ENCODE measurements at regions of chr11 and their contacts with region 1.

Region 1: GRCh38 chr11:67239783-67240575 is 26.3 kb upstream of the GRK2 start:
- DNase-seq: peak; percentile 98
- H3K4me3 Mint-ChIP-seq: peak overlapping the region; percentile 96
- H3K27ac Mint-ChIP-seq: peak overlapping the region; percentile 97
- H3K4me1 Mint-ChIP-seq: peaks cover 24% of the 10 kb centered on the region
- H3K27me3 Mint-ChIP-seq: no peaks in the 10 kb centered on the region
- CTCF ChIP-seq: no peak

Region 2: DNA sequence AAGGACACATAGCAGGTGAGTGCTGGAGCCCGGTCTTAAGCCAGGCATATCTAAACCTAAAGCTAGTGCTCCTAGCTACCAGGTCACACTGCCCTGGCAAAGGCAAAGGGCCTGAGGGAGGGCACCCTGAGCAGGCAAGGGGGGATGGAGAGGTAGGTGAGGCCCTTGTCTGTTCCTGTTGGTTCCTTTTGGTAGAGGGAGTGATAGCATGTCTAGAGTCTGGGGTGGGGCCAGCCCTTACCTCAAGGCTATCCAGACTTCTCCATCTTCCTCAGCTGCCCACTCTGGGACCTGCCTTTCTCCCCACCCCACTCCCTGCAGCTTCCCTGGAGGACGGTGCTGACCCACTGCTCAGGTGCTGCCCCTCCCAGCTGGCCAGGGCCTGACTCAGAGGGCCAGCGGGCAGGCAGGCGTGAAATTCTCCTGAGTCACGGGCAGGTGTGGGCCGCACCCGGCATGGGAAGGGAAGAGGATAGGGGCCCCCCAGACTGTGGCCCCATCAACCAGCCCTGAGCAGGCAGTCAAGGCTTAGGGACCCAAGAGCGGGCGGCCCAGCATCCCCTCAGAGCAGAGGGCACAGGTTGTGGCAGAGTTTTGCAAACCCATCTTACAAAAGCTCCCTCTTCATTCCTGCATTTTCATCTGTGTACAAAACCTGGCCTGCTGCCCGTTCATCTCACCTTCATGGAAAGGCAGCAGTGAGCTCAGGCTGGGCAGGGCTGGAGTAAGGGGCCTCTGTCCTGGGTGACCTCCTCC is 177.5 kb before region 1 on chr11:
- CTCF ChIA-PET with region 1: no interaction called
- POLR2A ChIA-PET with region 1: interaction called, 14 read pairs
- intact Hi-C with region 1: no loop called
- DNase-seq: peak; percentile 72
- H3K4me3 Mint-ChIP-seq: peak overlapping the region; percentile 62
- H3K27ac Mint-ChIP-seq: peak overlapping the region; percentile 89
- H3K4me1 Mint-ChIP-seq: peaks cover 25% of the 10 kb centered on the region
- H3K27me3 Mint-ChIP-seq: no peaks in the 10 kb centered on the region
- CTCF ChIP-seq: no peak

Region 3: DNA sequence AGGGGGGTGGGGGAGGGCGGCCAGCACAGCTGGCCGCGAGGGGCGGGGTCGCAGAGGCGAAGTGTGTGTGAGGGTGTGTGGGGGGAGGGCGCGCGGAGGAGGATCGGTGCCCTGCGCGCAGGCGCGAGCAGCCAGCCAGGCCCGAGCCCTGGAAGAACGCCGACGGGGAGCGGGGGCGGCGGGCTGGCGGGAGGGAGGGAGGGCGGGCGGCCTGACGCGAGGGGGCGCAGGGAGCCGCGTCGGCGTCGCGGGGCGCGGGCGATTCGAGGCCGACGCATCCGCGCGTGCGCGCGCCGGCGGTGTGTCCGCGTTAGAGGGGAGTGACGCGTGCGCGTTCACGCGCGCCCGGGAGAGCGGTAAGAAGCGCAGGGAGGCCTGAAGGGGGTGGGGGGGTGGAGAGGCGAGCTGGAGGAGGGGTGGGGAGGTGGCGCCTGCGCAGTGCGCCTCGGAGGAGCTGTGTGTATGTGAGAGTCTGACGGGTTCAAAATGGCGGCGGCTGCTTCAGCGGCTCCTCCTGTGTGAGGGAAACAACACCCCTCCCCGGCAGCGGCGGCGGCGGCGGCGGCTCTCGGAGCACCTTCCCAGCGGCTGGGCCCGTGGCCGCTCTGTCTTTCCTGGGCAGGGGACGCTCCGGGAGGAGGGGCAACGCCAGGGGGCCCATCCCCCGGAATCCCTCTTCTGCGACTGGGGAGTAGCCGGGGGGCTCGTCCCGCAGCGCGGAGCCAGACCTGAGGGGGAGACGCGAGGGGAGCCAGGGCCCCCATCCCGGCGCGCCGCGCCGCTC is 121.0 kb before region 1 on chr11 and contains the start of gene KDM2A:
- CTCF ChIA-PET with region 1: no interaction called
- POLR2A ChIA-PET with region 1: interaction called, 10 read pairs
- intact Hi-C with region 1: loop called (anchors 2 kb)
- DNase-seq: peak; percentile 97
- H3K4me3 Mint-ChIP-seq: peak within 1 kb of the TSS; percentile 93
- H3K27ac Mint-ChIP-seq: peak within 1 kb of the TSS; percentile 88
- H3K4me1 Mint-ChIP-seq: peaks cover 17% of the 10 kb centered on the region
- H3K27me3 Mint-ChIP-seq: no peaks in the 10 kb centered on the region
- CTCF ChIP-seq: peak; percentile 8
- total RNA-seq, gene KDM2A: 63.8 and 64.5 TPM in 2 replicates

Region 4: DNA sequence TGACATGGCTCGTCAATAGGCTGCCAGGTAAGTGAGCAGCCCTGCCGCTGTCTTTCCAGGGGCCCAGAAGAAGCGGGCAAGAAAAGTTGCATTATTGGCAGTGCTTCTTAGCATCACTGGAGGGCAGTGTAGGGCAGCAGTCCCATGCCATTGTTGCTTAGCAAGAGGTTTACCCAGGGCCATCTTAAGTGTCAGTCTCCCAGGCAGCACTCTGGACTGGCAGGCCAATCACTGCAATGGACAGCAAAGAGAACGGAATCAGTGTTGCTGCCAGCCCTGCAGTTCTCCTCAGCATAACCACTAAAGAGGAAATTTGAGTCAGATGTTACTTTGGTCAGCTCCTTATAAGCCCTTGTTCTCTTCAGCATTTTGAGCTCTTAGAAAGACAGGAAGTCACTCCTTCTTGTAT is 12.9 kb after region 1 on chr11:
- CTCF ChIA-PET with region 1: interaction called, 5 read pairs
- POLR2A ChIA-PET with region 1: interaction called, 28 read pairs
- intact Hi-C with region 1: no loop called
- DNase-seq: peak; percentile 46
- H3K4me3 Mint-ChIP-seq: no peak overlapping the region
- H3K27ac Mint-ChIP-seq: peak overlapping the region; percentile 37
- H3K4me1 Mint-ChIP-seq: peaks cover 15% of the 10 kb centered on the region
- H3K27me3 Mint-ChIP-seq: no peaks in the 10 kb centered on the region
- CTCF ChIP-seq: peak; percentile 18

Region 5: GRCh38 chr11:67265633-67266423 is 25.8 kb after region 1 on chr11:
- CTCF ChIA-PET with region 1: interaction called, 19 read pairs
- POLR2A ChIA-PET with region 1: interaction called, 35 read pairs
- intact Hi-C with region 1: no loop called
- DNase-seq: peak; percentile 57
- H3K4me3 Mint-ChIP-seq: peak overlapping the region; percentile 93
- H3K27ac Mint-ChIP-seq: peak overlapping the region; percentile 89
- H3K4me1 Mint-ChIP-seq: peaks cover 33% of the 10 kb centered on the region
- H3K27me3 Mint-ChIP-seq: no peaks in the 10 kb centered on the region
- CTCF ChIP-seq: peak; percentile 57

Region 6: GRCh38 chr11:67288452-67289225 is 48.7 kb after region 1 on chr11:
- CTCF ChIA-PET with region 1: no interaction called
- POLR2A ChIA-PET with region 1: interaction called, 12 read pairs
- intact Hi-C with region 1: no loop called
- DNase-seq: peak; percentile 92
- H3K4me3 Mint-ChIP-seq: peak overlapping the region; percentile 92
- H3K27ac Mint-ChIP-seq: peak overlapping the region; percentile 96
- H3K4me1 Mint-ChIP-seq: peaks cover 23% of the 10 kb centered on the region
- H3K27me3 Mint-ChIP-seq: no peaks in the 10 kb centered on the region
- CTCF ChIP-seq: peak; percentile 11

Measured in MCF 10A (cell line).